SK-N-SH (cell line): ENCODE measurements at regions of chr7 and their contacts with region 1.

Region 1: GRCh38 chr7:29408841-29409243 is 154.8 kb upstream of the PRR15 start:
- DNase-seq: peak; percentile 76
- H3K4me3 ChIP-seq: no peak overlapping the region
- H3K27ac ChIP-seq: no peak overlapping the region
- H3K4me1 ChIP-seq: no peaks in the 10 kb centered on the region; a peak in 1 of 4 replicates
- H3K27me3 ChIP-seq: 0 out of 2 replicates have a peak, but pooled peaks cover 4% of the 10 kb centered on the region
- CTCF ChIP-seq: peak; percentile 97
- EP300 ChIP-seq: no peak
- RAD21 ChIP-seq: peak; percentile 99

Region 2: DNA sequence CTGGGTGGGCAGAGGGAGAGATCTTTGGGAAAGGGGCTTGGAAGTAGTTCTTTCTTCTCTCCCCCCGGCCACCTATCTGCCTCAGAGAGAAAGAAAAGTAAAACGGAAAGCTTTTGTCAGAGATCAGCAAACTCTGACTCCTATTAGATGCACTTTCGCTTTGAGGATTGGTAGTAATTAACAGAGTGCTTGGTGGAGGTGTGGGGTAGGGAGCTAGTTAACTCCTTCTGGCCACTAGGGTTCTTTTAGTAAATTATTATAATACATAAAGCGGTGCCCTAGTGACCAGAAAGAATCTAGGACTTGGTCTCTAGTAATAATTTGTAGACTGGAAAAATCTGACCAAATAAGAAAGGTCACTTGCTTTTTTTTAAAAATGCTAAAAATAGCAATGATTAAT is 317.1 kb before region 1 on chr7:
- CTCF ChIA-PET with region 1: interaction called, 12 read pairs
- POLR2A ChIA-PET with region 1: no interaction called
- DNase-seq: no peak
- H3K4me3 ChIP-seq: no peak overlapping the region
- H3K27ac ChIP-seq: peak overlapping the region in 1 of 2 experiments; percentile 36; a peak in 1 of 4 replicates
- H3K4me1 ChIP-seq: peaks cover 0 to 26% of the 10 kb centered on the region in 2 experiments; a peak in 2 of 4 replicates
- H3K27me3 ChIP-seq: peaks cover 7% of the 10 kb centered on the region; the same call in 1 of the 2 replicates
- CTCF ChIP-seq: no peak
- EP300 ChIP-seq: no peak
- RAD21 ChIP-seq: no peak

Region 3: DNA sequence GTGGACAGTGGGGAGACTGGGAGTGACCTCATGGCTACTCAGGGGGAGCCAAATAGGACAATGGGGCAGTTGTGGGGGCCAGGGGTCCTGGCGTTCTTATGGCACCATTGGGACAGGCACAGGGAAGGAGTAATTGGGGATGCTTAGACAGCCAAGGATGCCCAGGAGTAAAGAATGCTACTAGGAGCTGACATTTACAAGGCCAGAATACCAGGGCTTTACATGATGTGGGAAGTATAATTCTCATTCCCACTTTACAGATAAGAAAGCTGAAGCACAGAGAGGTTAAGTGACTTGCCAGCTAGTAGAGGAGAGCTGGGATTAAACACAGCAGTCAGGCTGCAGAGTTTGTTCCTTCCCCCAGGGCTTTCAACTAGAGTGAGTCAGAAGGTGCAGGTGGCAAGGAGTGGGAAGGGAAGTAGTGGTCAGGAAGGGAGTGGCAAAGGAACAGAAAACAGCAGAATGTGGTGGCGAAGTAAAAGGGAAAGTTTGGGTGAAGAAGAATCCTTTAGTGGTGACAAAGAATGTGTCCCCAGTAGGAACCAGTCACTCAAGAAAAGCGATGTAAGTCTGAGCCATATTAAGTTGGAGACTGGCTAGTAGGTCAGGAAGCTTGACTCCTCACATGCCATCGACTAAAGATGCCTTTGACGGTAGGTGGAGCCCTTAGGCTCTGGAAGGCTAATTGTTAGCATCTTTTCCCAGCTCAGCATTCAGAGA is 295.3 kb before region 1 on chr7:
- CTCF ChIA-PET with region 1: interaction called, 95 read pairs
- POLR2A ChIA-PET with region 1: no interaction called
- DNase-seq: no peak
- H3K4me3 ChIP-seq: no peak overlapping the region
- H3K27ac ChIP-seq: no peak overlapping the region
- H3K4me1 ChIP-seq: no peaks in the 10 kb centered on the region
- H3K27me3 ChIP-seq: peaks cover 15% of the 10 kb centered on the region
- CTCF ChIP-seq: peak; percentile 24; the same call in 1 of the 2 replicates
- EP300 ChIP-seq: no peak
- RAD21 ChIP-seq: peak; percentile 62

Region 4: DNA sequence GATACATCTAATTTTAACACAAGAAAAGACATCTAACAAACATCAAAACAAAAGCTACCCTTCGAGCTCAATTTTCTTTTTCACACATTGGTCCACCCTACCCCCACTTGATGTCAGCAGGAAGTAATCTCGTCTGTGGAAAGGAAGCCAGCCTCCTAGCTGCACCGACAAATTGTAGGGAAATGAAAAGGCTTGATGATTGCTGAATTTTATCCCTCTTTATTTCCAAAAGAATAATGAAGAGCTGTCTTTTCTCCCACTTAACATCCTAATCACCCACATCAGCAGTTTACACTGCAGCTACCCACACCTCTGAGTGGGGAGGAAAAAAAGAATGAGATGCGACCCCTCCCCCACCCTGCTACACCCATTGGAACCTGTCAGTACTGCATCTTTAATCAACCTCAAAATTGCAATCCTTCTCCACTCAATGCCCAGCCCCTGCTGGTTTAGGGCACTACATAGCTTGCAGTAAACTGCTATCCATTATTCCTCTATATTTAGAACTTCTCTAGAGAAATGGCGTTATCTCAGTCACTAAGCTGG is 251.9 kb before region 1 on chr7:
- CTCF ChIA-PET with region 1: interaction called, 15 read pairs
- POLR2A ChIA-PET with region 1: no interaction called
- DNase-seq: peak; percentile 39
- H3K4me3 ChIP-seq: no peak overlapping the region
- H3K27ac ChIP-seq: no peak overlapping the region
- H3K4me1 ChIP-seq: peaks cover 0 to 26% of the 10 kb centered on the region in 2 experiments; a peak in 2 of 4 replicates
- H3K27me3 ChIP-seq: no peaks in the 10 kb centered on the region
- CTCF ChIP-seq: no peak
- EP300 ChIP-seq: no peak
- RAD21 ChIP-seq: no peak

Region 5: GRCh38 chr7:29337546-29338116 is 71.2 kb before region 1 on chr7:
- CTCF ChIA-PET with region 1: interaction called, 10 read pairs
- POLR2A ChIA-PET with region 1: no interaction called
- DNase-seq: no peak
- H3K4me3 ChIP-seq: no peak overlapping the region
- H3K27ac ChIP-seq: no peak overlapping the region
- H3K4me1 ChIP-seq: peaks cover 8 to 11% of the 10 kb centered on the region in 2 experiments; a peak in 3 of 4 replicates
- H3K27me3 ChIP-seq: 0 out of 2 replicates have a peak, but pooled peaks cover 4% of the 10 kb centered on the region
- CTCF ChIP-seq: no peak
- EP300 ChIP-seq: no peak
- RAD21 ChIP-seq: no peak

Region 6: DNA sequence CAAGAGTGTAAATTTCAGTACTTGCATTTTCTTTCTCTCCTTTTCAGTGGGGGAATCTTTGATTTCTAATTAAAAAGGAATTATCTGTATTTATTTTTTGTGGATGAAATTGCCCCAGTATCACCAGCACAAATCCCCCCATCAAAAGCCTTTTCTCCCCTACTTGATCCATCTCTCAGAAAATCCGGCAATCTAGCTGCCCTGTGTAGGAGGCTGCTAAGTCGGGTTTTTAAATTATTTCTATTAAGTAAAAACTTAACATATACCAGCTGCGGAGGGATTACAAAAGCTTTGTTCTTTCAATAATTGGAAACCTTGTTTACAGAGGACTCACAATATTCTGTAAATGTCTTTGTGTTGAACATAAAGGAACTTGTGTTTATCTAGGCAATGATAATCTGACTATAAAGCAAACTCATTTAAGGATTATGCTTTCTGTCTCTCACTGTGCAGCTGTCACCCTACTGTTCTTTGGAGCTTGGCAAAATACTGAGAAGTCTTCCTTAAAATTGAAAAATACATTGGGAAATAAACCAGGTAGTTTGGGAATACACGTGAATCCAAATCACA is 22.6 kb before region 1 on chr7:
- CTCF ChIA-PET with region 1: interaction called, 27 read pairs
- POLR2A ChIA-PET with region 1: no interaction called
- DNase-seq: no peak
- H3K4me3 ChIP-seq: no peak overlapping the region
- H3K27ac ChIP-seq: no peak overlapping the region
- H3K4me1 ChIP-seq: peaks cover 0 to 8% of the 10 kb centered on the region in 2 experiments; a peak in 1 of 4 replicates
- H3K27me3 ChIP-seq: peaks cover 11% of the 10 kb centered on the region; the same call in 1 of the 2 replicates
- CTCF ChIP-seq: no peak
- EP300 ChIP-seq: no peak
- RAD21 ChIP-seq: no peak

Region 7: GRCh38 chr7:29432721-29433120 is 23.9 kb after region 1 on chr7:
- CTCF ChIA-PET with region 1: interaction called, 20 read pairs
- POLR2A ChIA-PET with region 1: no interaction called
- DNase-seq: no peak
- H3K4me3 ChIP-seq: no peak overlapping the region
- H3K27ac ChIP-seq: no peak overlapping the region
- H3K4me1 ChIP-seq: no peaks in the 10 kb centered on the region
- H3K27me3 ChIP-seq: no peaks in the 10 kb centered on the region
- CTCF ChIP-seq: no peak
- EP300 ChIP-seq: no peak
- RAD21 ChIP-seq: no peak

Region 8: GRCh38 chr7:29538389-29538788 is 129.5 kb after region 1 on chr7:
- CTCF ChIA-PET with region 1: no interaction called
- POLR2A ChIA-PET with region 1: no interaction called
- DNase-seq: no peak
- H3K4me3 ChIP-seq: no peak overlapping the region
- H3K27ac ChIP-seq: no peak overlapping the region
- H3K4me1 ChIP-seq: no peaks in the 10 kb centered on the region; a peak in 1 of 4 replicates
- H3K27me3 ChIP-seq: no peaks in the 10 kb centered on the region
- CTCF ChIP-seq: no peak
- EP300 ChIP-seq: no peak
- RAD21 ChIP-seq: peak; percentile 33; the same call in 1 of the 2 replicates

Region 9: GRCh38 chr7:29622335-29623265 is 213.8 kb after region 1 on chr7:
- CTCF ChIA-PET with region 1: no interaction called
- POLR2A ChIA-PET with region 1: no interaction called
- DNase-seq: peak; percentile 36
- H3K4me3 ChIP-seq: no peak overlapping the region; a peak in 1 of 4 replicates
- H3K27ac ChIP-seq: peak overlapping the region; percentile 74 to 76; a peak in 3 of 4 replicates
- H3K4me1 ChIP-seq: peaks cover 8 to 20% of the 10 kb centered on the region in 2 experiments
- H3K27me3 ChIP-seq: no peaks in the 10 kb centered on the region
- CTCF ChIP-seq: peak; percentile 37
- EP300 ChIP-seq: peak; percentile 46 to 97; a peak in 3 of 4 replicates
- RAD21 ChIP-seq: no peak

Region 10: DNA sequence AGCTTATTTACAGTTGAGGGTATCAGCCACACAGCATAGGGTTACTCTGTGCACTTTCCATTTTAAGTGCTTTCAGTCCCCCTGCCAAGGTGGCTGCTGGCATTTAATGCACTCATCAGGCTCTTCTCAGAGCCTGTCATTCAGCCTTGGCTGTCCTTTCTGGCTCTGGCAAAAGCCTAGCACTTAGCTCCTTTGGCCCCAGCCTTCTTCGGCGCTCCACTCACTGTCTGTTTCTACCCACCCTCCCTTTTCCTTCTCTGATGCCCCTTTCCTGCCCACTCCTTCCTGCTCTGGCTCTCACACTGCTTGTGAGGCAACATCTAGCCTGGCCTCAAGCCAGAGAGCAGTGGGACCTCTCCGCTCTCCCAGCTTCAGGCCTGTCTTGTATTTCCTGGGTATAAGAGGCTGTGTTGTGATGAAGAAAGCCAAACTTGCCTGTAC is 457.7 kb after region 1 on chr7:
- CTCF ChIA-PET with region 1: no interaction called
- POLR2A ChIA-PET with region 1: no interaction called
- DNase-seq: no peak
- H3K4me3 ChIP-seq: no peak overlapping the region
- H3K27ac ChIP-seq: no peak overlapping the region
- H3K4me1 ChIP-seq: peaks cover 13 to 16% of the 10 kb centered on the region in 2 experiments; a peak in 3 of 4 replicates
- H3K27me3 ChIP-seq: no peaks in the 10 kb centered on the region
- CTCF ChIP-seq: no peak
- EP300 ChIP-seq: no peak
- RAD21 ChIP-seq: no peak